ENCODE measurements at regions of chr5 and their contacts with region 1.

Region 1: GRCh38 chr5:96595300-96596090 is 66.7 kb upstream of the CAST start:
- DNase-seq: no peak

Region 2: DNA sequence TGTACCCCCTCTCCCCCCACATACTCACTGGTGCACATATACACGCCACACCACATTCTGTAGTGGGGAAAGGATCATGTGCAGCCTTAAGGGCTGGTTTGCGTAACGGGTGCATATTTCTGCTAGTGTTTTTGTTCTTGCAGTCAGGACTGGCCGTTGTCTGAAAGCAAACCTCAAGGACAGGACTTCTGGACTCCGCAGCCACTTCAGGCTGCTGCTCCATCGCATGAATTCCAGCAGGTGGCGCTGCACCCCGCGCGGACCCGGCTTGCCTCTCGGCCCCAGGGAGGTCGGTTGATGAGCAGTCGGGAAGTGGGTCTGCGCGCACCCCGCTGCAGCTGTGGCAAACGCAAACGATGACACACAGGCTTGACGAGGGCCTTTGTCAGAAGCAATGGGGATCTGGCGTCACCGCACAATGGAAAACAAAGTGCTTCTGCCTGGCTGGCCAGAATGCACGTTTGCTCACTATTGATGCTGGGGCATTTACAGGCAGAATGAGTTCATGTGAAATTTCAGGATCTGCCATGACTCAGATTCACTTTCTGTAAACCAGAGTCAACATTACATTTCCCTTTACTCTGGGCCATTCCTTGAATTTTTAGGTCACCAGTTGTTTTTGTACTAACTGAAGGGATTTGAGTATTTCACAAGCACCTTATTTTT is 736.7 kb before region 1 on chr5:
- intact Hi-C with region 1: loop called in 1 of 2 experiments (anchors 10 kb)
- DNase-seq: peak; percentile 97

Region 3: DNA sequence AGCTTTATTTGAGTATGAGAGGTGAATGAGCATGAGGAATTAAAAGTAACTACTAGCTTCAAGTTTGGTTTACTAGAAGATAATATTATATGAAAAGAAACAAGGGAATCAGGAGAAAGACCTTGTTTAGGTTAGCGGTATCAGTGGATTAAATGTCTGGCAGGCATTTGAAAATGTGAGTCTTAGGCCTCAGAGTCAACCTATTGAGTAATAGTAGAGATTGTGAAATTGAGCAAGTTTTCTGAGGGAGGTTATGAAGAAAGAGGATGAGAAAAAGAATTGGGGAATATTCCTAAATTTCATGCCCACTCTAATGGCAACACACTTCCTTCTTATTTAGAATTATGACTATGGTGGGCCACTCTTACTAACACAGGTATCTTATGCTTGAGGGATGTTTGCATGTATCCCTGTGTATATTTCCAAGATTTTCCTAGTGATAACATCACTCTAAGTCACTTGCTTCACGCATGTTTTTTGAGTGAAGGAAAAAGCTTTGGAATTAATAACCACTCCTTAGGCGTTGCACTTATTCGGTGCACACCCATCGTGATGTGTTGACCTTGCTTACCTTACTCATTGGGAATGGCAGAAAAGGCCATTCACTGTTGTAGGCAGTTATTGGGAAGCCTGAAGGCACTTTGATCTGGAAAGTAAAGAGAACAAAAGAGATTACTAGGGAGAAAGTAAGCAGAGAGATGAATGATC is 625.7 kb before region 1 on chr5:
- intact Hi-C with region 1: loop called in 1 of 2 experiments (anchors 5 kb)
- DNase-seq: no peak

Region 4: GRCh38 chr5:96344678-96345577 is 250.6 kb before region 1 on chr5:
- intact Hi-C with region 1: loop called (anchors 5 to 10 kb)
- DNase-seq: no peak

Region 5: GRCh38 chr5:96614110-96614691 is 18.7 kb after region 1 on chr5:
- intact Hi-C with region 1: no loop called
- DNase-seq: no peak

Measured in posterior vena cava (tissue), 2 donors.